ENCODE measurements at regions of chr19 and their contacts with region 1.

Region 1: GRCh38 chr19:58519355-58520256 is at the start of gene ZBTB45:
- DNase-seq: peak; percentile 96
- ATAC-seq: peak; percentile 82
- H3K4me3 Mint-ChIP-seq: peak within 1 kb of the TSS; percentile 82
- H3K27ac Mint-ChIP-seq: peak within 1 kb of the TSS; percentile 94
- H3K4me1 Mint-ChIP-seq: peaks cover 39% of the 10 kb centered on the region
- H3K27me3 Mint-ChIP-seq: no peaks in the 10 kb centered on the region
- total RNA-seq, gene ZBTB45: 10.1 to 11.1 TPM

Region 2: GRCh38 chr19:58278157-58279041 is 241.2 kb before region 1 on chr19 and contains the start of gene ZNF8:
- CTCF ChIA-PET with region 1: interaction called, 3 read pairs
- POLR2A ChIA-PET with region 1: no interaction called
- intact Hi-C with region 1: loop called in 1 of 2 experiments (anchors 1 kb)
- DNase-seq: peak; percentile 99
- ATAC-seq: peak; percentile 98
- H3K4me3 Mint-ChIP-seq: peak within 1 kb of the TSS; percentile 98
- H3K27ac Mint-ChIP-seq: peak within 1 kb of the TSS; percentile 95
- H3K4me1 Mint-ChIP-seq: peaks cover 28% of the 10 kb centered on the region
- H3K27me3 Mint-ChIP-seq: no peaks in the 10 kb centered on the region
- total RNA-seq, gene ZNF8: 4.4 to 4.5 TPM

Region 3: DNA sequence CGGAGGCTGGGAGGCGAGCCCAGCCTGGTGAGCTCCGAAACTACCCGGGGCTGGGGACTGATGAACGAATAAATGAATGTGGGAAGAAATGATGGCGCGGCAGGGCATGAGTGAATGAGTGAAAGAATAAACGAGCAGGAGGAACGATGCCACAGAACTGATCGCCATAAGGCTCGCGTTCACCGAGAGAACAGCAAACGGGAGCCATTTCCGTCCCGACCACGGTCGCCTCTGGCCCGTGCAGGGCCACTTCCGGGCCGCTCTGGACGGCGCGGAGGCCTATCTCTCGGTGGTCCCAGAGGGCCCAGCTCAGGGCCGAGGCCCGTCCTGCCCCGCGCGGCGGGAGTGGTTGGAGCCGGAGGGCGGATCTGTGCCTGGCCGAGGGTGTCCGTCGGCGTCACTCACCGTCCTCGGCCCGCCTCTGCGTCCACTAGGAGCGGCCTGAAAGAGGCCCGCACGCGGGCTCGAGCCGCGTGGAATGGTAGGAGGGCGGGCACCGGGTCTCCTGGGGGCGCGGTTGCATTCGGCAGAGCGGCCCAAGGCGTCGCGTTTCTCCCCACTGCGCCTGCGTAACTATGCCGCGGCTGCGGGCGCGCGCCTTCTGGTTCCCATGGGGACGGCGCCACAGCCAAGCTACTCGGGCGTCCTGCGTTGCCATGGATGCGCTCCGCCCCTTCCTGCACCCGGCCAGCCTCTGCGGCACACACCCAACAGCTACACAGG is 157.2 kb before region 1 on chr19 and contains the start of gene ZNF497:
- CTCF ChIA-PET with region 1: interaction called, 4 read pairs
- POLR2A ChIA-PET with region 1: no interaction called
- intact Hi-C with region 1: loop called in 1 of 2 experiments (anchors 1 kb)
- DNase-seq: peak; percentile 99
- ATAC-seq: peak; percentile 94
- H3K4me3 Mint-ChIP-seq: peak within 1 kb of the TSS; percentile 86
- H3K27ac Mint-ChIP-seq: peak within 1 kb of the TSS; percentile 93
- H3K4me1 Mint-ChIP-seq: peaks cover 7% of the 10 kb centered on the region
- H3K27me3 Mint-ChIP-seq: no peaks in the 10 kb centered on the region
- total RNA-seq, gene ZNF497: 1.1 to 1.5 TPM

Region 4: DNA sequence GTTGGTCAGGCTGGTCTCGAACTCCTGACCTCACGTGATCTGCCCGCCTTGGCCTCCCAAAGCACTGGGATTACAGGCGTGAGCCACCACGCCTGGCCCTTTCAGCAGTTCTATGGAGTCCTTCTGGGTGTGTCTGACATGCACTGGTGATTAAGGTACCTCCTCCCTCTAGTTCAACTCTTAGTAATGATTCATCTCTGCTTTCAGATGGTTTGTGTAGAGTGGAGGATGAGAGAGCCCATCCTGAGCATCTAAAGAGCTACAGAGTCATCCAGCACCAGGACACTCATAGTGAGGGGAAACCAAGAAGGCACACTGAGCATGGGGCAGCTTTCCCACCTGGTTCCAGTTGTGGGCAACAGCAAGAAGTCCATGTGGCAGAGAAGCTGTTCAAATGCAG is 103.0 kb before region 1 on chr19:
- CTCF ChIA-PET with region 1: no interaction called
- POLR2A ChIA-PET with region 1: no interaction called
- intact Hi-C with region 1: no loop called
- DNase-seq: no peak
- ATAC-seq: no peak
- H3K4me3 Mint-ChIP-seq: no peak overlapping the region
- H3K27ac Mint-ChIP-seq: no peak overlapping the region
- H3K4me1 Mint-ChIP-seq: no peaks in the 10 kb centered on the region
- H3K27me3 Mint-ChIP-seq: no peaks in the 10 kb centered on the region

Region 5: GRCh38 chr19:58451358-58452101 is 68.1 kb before region 1 on chr19 and contains the start of gene ZNF324B:
- CTCF ChIA-PET with region 1: interaction called, 6 read pairs
- POLR2A ChIA-PET with region 1: no interaction called
- intact Hi-C with region 1: loop called in 1 of 2 experiments (anchors 1 kb)
- DNase-seq: peak; percentile 98
- ATAC-seq: peak; percentile 99
- H3K4me3 Mint-ChIP-seq: peak within 1 kb of the TSS; percentile 77
- H3K27ac Mint-ChIP-seq: peak within 1 kb of the TSS; percentile 55
- H3K4me1 Mint-ChIP-seq: peaks cover 25% of the 10 kb centered on the region
- H3K27me3 Mint-ChIP-seq: peaks cover 15% of the 10 kb centered on the region
- total RNA-seq, gene ZNF324B: 5.8 to 7.5 TPM

Region 6: DNA sequence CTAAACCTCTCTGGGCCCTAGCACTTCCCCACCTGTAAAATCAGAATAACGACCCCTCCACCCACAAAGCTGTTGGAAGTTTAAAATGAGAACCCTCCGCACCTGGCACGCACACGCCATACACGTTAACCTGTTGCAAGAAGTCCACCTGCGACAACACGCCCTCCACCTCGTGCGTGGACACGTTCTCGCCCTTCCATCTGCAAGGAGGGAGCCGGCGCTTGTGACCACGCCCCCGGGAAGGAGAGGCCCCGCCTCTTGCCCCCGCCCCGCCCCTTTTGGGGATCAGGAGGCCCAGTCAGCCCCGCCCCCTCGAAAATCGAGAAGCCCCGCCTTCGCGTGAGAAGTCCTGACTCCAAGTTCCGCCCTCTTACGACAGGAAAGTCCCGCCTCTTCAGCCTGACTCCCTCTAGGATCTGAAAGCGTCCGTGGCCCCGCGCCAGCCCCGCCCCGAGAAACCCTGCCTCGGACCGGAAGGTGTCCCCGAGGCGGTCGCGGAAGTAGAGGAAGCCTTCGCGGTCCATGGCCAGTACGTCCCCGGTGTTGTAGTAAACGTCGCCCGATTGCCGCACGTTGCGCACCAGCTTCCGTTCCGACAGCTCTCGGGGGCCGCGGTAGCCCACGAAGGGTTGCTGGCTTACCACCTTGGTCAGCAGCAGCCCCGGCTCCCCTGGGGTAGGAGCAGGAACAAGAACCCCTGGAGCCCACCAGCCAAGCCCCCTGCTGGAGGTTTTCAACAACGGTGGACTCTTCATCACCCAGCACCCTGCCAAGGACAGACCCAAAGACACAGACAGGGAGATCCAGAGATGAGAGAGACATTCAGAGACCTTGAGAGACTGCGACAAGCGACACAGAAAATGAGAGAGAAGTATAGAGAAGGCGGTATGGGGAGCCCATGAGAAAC is 20.3 kb before region 1 on chr19:
- CTCF ChIA-PET with region 1: interaction called, 8 read pairs
- POLR2A ChIA-PET with region 1: interaction called, 3 read pairs
- intact Hi-C with region 1: loop called (anchors 1 kb)
- DNase-seq: peak; percentile 100
- ATAC-seq: peak; percentile 99
- H3K4me3 Mint-ChIP-seq: peak overlapping the region; percentile 81
- H3K27ac Mint-ChIP-seq: peak overlapping the region; percentile 95
- H3K4me1 Mint-ChIP-seq: peaks cover 19% of the 10 kb centered on the region
- H3K27me3 Mint-ChIP-seq: no peaks in the 10 kb centered on the region

Region 7: GRCh38 chr19:58558623-58559274 is 39.1 kb after region 1 on chr19:
- CTCF ChIA-PET with region 1: interaction called, 22 read pairs
- POLR2A ChIA-PET with region 1: interaction called, 9 read pairs
- intact Hi-C with region 1: loop called (anchors 1 kb)
- DNase-seq: peak; percentile 100
- ATAC-seq: peak; percentile 69
- H3K4me3 Mint-ChIP-seq: peak overlapping the region; percentile 92
- H3K27ac Mint-ChIP-seq: peak overlapping the region; percentile 100
- H3K4me1 Mint-ChIP-seq: peaks cover 65% of the 10 kb centered on the region
- H3K27me3 Mint-ChIP-seq: no peaks in the 10 kb centered on the region